ENCODE measurements at regions of chr17 and their contacts with region 1.

Region 1: DNA sequence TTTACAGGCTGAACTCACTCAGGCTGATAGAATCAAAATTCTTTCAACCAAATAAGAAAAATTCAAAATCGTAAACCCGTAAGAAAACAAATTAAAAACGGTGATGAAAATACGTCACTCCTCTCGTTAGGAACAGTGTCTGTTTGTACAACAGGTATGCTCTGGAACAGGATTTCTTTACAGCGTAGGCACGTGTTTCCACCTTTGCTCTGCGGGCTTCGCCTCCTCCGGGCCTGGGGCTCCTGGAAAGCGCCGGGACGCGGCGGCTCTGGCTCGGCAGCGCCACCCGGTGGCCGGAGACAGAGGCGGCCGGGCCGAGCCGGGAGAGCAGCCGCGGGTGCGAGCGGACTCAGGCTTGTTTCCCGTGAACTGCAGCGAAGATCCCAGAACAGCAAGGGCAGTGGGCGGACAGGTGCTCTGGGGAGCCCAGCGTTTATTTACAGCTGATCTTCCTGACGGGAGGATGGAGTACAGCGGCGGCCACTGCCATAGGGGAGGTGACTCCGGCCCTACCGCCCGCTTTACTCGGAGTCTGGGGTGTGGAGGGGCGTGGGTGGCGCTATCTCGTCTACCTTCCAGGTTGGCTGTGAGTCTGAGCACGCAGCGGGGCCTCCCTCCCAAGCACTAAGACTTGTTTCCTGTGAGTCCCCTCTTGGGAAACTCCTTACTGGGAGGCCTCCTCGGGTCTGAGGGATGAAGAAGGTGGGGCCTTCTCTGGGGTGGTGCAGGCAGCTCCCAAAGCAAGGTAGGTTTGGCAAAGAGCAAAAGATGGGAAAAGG is 40.5 kb upstream of the ATP2A3 start:
- DNase-seq: no peak
- H3K4me3 ChIP-seq: no peak overlapping the region
- CTCF ChIP-seq: peak; percentile 81

Region 2: GRCh38 chr17:3865176-3865575 is 139.5 kb before region 1 on chr17:
- CTCF ChIA-PET with region 1: interaction called, 36 read pairs
- POLR2A ChIA-PET with region 1: no interaction called
- DNase-seq: no peak
- H3K4me3 ChIP-seq: no peak overlapping the region
- CTCF ChIP-seq: no peak

Region 3: GRCh38 chr17:3921502-3922319 is 83.0 kb before region 1 on chr17:
- CTCF ChIA-PET with region 1: interaction called, 137 read pairs
- POLR2A ChIA-PET with region 1: no interaction called
- DNase-seq: no peak
- H3K4me3 ChIP-seq: no peak overlapping the region
- CTCF ChIP-seq: no peak

Region 4: GRCh38 chr17:3935140-3935542 is 69.6 kb before region 1 on chr17:
- CTCF ChIA-PET with region 1: interaction called, 18 read pairs
- POLR2A ChIA-PET with region 1: no interaction called
- DNase-seq: no peak
- H3K4me3 ChIP-seq: no peak overlapping the region
- CTCF ChIP-seq: peak; percentile 71

Region 5: GRCh38 chr17:3993493-3994220 is 11.0 kb before region 1 on chr17:
- CTCF ChIA-PET with region 1: interaction called, 19 read pairs
- POLR2A ChIA-PET with region 1: no interaction called
- DNase-seq: no peak
- H3K4me3 ChIP-seq: no peak overlapping the region
- CTCF ChIP-seq: no peak

Region 6: DNA sequence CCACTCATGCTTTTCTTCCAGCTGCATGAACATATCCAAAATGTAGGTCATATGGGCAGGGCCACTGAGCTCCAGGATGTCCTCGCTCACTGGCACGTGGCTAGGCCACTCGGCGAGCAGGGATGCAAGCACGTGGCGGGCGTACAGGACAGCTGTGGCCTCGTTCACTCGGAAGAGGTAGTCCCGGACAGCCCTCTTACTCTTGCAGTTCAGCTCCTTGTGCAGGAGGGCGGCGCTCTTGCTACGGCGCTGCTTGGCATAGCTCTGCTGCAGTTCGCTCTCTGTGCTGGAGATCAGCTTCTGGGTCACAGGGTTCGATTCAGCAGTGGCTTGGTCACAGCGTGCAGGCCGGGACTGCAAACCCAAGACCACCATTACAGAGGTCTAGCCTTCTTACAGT is 12.7 kb after region 1 on chr17:
- CTCF ChIA-PET with region 1: interaction called, 35 read pairs
- POLR2A ChIA-PET with region 1: no interaction called
- DNase-seq: no peak
- H3K4me3 ChIP-seq: no peak overlapping the region
- CTCF ChIP-seq: no peak

Measured in AG04449 (cell line).